Common myeloid progenitor, CD34-positive (primary cell): ENCODE measurements at regions of chr10 and their contacts with region 1.

Region 1: GRCh38 chr10:103510776-103511752 is 17.6 kb downstream of the NEURL1 start:
- DNase-seq: no peak
- H3K4me3 ChIP-seq: no peak overlapping the region
- H3K27ac ChIP-seq: no peak overlapping the region
- H3K4me1 ChIP-seq: peaks cover 0 to 18% (median under 1%) of the 10 kb centered on the region in 4 experiments
- H3K27me3 ChIP-seq: no peaks in the 10 kb centered on the region

Region 2: GRCh38 chr10:103542764-103543616 is 31.9 kb after region 1 on chr10:
- CTCF ChIA-PET with region 1: interaction called, 12 read pairs
- POLR2A ChIA-PET with region 1: no interaction called
- DNase-seq: peak; percentile 47 to 69 (median 69)
- H3K4me3 ChIP-seq: peak overlapping the region in 6 of 7 experiments; percentile 33 to 70 (median 53)
- H3K27ac ChIP-seq: no peak overlapping the region
- H3K4me1 ChIP-seq: peaks cover 2 to 18% (median 10%) of the 10 kb centered on the region in 4 experiments
- H3K27me3 ChIP-seq: peaks cover 0 to 2% (median 0%) of the 10 kb centered on the region in 5 experiments